RWPE1 (cell line): ENCODE measurements at regions of chr1 and their contacts with region 1.

Region 1: DNA sequence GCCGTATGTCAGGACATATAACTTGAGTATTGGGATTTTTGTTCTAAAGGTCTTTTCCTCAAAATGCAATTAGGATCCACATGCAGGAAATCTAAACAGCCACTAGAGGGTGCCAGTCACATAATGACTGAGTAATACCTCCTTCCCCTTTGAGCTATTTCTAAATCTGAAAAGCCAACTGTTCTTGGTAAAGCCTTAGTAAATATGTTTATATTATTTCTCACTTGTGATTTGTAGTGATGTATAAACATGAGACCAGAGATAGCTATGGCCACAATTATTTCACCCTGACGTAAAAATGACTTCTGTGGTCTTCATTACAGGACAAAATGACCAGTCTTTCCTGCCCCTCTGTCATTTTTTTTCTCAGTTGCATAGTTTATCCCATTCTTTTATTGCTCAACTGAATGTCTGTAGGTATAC is 41.0 kb upstream of the DR1 start:
- DNase-seq: peak; percentile 55
- H3K27ac ChIP-seq: no peak overlapping the region
- CTCF ChIP-seq: peak; percentile 94

Region 2: GRCh38 chr1:93433407-93433961 is 128.8 kb after region 1 on chr1:
- CTCF ChIA-PET with region 1: interaction called, 10 read pairs
- POLR2A ChIA-PET with region 1: no interaction called
- DNase-seq: no peak
- H3K27ac ChIP-seq: no peak overlapping the region
- CTCF ChIP-seq: no peak